Aorta (tissue), 5 donors: ENCODE measurements at regions of chr5 and their contacts with region 1.

Region 1: DNA sequence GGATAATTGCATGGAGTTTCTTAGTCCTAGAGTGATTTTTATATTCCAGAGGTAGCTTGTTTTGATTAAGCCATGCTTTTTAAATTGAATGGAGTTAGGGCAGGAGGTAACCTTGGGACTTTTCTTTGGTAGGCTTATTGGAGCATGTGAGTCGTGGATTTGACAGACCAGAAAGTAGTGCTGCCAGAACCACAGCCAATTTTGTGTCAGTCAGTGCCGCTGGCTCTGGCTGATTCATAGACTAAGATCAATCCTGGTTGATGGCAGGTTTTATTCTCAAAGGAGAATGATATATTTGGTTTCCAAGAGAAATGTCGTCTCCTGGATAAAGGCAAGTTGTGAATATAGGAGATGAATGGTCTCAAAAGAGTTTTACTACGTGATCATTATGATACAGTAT is 20.3 kb downstream of the RAI14 start:
- DNase-seq: peak in 1 of 2 donors; percentile 49
- ATAC-seq: no peak
- H3K4me3 ChIP-seq: no peak overlapping the region
- H3K27ac ChIP-seq: peak overlapping the region in 1 of 2 donors; percentile 59
- H3K4me1 ChIP-seq: peaks cover 7 to 26% of the 10 kb centered on the region in 2 donors
- H3K27me3 ChIP-seq: no peaks in the 10 kb centered on the region

Region 2: GRCh38 chr5:34496701-34497469 is 179.5 kb before region 1 on chr5:
- intact Hi-C with region 1: no loop called
- DNase-seq: peak; percentile 71 to 91
- ATAC-seq: peak; percentile 84
- H3K4me3 ChIP-seq: no peak overlapping the region
- H3K27ac ChIP-seq: peak overlapping the region; percentile 82 to 85
- H3K4me1 ChIP-seq: peaks cover 6 to 18% of the 10 kb centered on the region in 2 donors
- H3K27me3 ChIP-seq: no peaks in the 10 kb centered on the region

Region 3: GRCh38 chr5:34717426-34718327 is 41.3 kb after region 1 on chr5:
- intact Hi-C with region 1: loop called in 1 of 2 experiments (anchors 5 kb)
- DNase-seq: no peak
- ATAC-seq: peak; percentile 68
- H3K4me3 ChIP-seq: no peak overlapping the region
- H3K27ac ChIP-seq: peak overlapping the region; percentile 20 to 93
- H3K4me1 ChIP-seq: peaks cover 0 to 3% of the 10 kb centered on the region in 2 donors
- H3K27me3 ChIP-seq: no peaks in the 10 kb centered on the region